GM10248 (cell line): ENCODE measurements at regions of chr4 and their contacts with region 1.

Region 1: DNA sequence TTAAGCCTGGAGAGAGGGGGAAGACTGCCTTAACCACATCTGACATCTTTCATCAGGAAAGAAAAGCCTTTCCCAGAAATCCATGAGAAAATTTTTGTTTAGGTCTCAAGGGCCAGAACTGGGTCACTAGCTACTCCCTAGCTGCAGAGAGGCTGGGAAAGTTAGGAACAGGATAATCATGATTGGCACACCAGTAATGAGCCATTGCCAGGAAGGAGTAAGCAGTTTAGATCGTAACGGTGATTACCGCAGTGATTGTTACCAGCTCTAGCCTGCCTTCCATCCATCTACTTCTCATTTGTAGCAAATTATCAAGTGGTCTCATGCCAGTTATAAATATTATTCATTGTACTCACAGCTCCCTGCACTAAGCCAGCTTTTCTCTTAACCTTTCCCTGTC is 22.7 kb upstream of the STX18 start:
- DNase-seq: no peak
- CTCF ChIP-seq: no peak

Region 2: DNA sequence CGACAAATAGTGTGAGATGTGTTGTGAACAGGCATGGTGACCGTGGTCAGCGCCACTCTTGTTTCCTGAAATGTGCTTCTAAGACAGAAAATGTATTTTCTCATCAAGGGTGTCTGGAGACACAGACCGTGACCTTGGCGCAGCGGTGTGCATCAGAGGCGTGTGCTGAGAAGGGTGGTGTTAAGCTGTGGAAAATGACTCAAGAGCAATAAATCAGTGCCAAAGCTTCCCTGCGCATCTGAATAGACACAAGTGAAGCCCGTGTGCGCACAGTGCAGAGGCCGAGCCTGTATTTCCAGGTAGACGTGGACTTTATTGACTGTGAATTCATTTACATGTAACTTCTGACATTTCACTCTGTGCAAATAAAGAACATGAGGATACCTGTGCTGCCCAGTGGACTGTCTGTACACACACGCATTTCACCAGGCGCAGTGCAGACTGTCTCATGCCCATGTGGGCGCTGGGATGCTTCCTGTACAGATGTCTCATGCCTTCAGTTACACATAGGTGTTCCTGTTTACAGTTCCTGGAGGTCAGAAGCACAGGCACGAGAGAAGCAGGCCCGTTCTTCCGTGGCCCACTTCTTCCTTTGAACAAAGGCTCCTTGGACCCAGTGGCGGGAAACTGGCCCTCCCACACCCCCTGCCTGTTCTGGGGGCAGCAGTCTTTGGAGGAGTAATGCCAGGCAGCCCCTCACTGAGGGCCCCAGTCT is 145.7 kb before region 1 on chr4:
- CTCF ChIA-PET with region 1: no interaction called
- POLR2A ChIA-PET with region 1: no interaction called
- DNase-seq: no peak
- CTCF ChIP-seq: no peak

Region 3: GRCh38 chr4:4575273-4576211 is 11.0 kb after region 1 on chr4:
- CTCF ChIA-PET with region 1: interaction called, 28 read pairs
- POLR2A ChIA-PET with region 1: no interaction called
- DNase-seq: peak; percentile 79
- CTCF ChIP-seq: peak; percentile 26

Region 4: GRCh38 chr4:4590546-4590945 is 26.0 kb after region 1 on chr4:
- CTCF ChIA-PET with region 1: no interaction called
- POLR2A ChIA-PET with region 1: no interaction called
- DNase-seq: no peak
- CTCF ChIP-seq: no peak